Activated CD4-positive, alpha-beta T cell treated with anti-CD3 and anti-CD28 coated beads for 36 hours (primary cell): ENCODE measurements at regions of chr10 and their contacts with region 1.

Region 1: DNA sequence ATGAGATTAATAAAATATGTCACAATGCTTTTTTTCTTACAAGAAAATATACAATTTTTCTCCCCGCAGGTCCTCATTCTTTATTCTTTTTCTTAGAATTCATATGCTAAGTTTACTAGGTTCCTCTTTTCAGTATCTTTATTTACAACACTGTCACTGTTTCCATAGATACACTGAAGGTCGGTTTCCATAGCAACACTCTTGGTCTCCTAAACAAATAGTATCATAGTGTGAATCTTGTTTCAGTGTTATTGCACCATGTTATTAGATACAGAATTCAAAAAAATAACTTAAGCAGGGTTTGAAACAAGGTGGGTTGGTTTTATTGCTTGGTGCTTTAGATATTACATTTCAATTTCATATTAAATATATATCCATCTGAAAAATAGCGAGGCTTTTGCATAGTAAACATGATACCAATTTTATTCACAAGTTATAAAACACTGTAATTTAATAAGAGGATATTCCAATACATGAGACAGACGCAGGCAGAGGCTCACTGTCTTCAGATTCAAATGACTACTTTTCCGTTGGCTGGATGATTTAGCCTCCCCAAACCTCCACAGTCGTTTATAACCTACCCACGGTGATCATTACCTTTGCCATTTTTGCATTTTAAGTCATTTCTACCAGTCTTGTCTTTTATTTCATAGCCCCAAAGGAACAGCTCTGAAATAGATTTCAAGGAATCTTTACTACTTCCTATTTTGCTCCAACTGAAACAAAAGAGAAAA is 88.9 kb upstream of the KLF6 start:
- DNase-seq: no peak
- ATAC-seq: peak; percentile 27
- H3K4me3 Mint-ChIP-seq: peak overlapping the region; percentile 15
- H3K27ac Mint-ChIP-seq: peak overlapping the region; percentile 89
- H3K4me1 Mint-ChIP-seq: peaks cover 65% of the 10 kb centered on the region
- H3K27me3 Mint-ChIP-seq: no peaks in the 10 kb centered on the region

Region 2: DNA sequence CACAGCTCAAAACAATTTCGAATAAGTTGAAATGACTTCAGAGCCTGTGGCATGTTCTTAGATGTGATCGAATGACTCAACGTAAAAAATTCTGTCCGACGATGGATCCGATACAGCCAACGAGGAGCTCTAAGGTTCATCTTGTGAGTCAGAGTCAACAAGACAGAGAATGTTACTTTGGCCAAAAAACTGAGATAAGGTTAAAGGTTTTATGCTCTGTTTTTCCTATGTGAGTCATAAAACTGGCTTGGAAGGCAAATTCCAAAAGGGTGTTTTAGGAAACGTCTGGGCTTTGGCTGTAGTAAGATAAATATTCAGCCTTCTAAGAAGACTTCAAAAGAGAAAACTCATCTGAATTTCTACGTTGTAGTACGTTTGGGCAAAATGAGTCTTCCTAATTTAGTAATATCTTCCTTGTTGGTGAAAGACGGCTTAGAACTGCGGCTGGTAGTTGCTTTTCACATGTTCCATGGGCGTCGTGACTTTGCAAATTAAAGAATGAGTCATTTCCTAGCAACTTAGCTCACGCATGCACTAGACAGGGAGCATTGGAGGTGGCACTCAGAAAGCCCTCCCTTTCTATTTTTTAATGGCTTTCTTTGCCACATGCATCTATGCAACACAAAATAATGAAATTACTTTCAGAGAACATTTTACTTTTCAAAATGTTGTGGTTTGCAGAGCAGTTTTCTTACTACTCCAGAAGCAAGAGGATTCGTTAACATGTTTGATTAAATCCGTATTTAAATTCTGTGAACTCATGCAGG is 778.3 kb before region 1 on chr10:
- CTCF ChIA-PET with region 1: no interaction called
- POLR2A ChIA-PET with region 1: no interaction called
- intact Hi-C with region 1: loop called in 1 of 2 experiments (anchors 10 kb)
- DNase-seq: peak; percentile 80
- ATAC-seq: peak; percentile 86
- H3K4me3 Mint-ChIP-seq: peak overlapping the region; percentile 15
- H3K27ac Mint-ChIP-seq: peak overlapping the region; percentile 83
- H3K4me1 Mint-ChIP-seq: peaks cover 55% of the 10 kb centered on the region
- H3K27me3 Mint-ChIP-seq: no peaks in the 10 kb centered on the region

Region 3: GRCh38 chr10:3811291-3811870 is 62.5 kb before region 1 on chr10:
- CTCF ChIA-PET with region 1: interaction called, 4 read pairs
- POLR2A ChIA-PET with region 1: interaction called, 17 read pairs
- intact Hi-C with region 1: loop called in 1 of 2 experiments (anchors 1 kb)
- DNase-seq: peak; percentile 78
- ATAC-seq: peak; percentile 62
- H3K4me3 Mint-ChIP-seq: peak overlapping the region; percentile 42
- H3K27ac Mint-ChIP-seq: no peak overlapping the region
- H3K4me1 Mint-ChIP-seq: peaks cover 80% of the 10 kb centered on the region
- H3K27me3 Mint-ChIP-seq: no peaks in the 10 kb centered on the region

Region 4: GRCh38 chr10:3887885-3888476 is 14.1 kb after region 1 on chr10:
- CTCF ChIA-PET with region 1: interaction called, 6 read pairs
- POLR2A ChIA-PET with region 1: interaction called, 13 read pairs
- intact Hi-C with region 1: no loop called
- DNase-seq: peak; percentile 72
- ATAC-seq: peak; percentile 83
- H3K4me3 Mint-ChIP-seq: peak overlapping the region; percentile 28
- H3K27ac Mint-ChIP-seq: peak overlapping the region; percentile 93
- H3K4me1 Mint-ChIP-seq: peaks cover 38% of the 10 kb centered on the region
- H3K27me3 Mint-ChIP-seq: peaks cover 3% of the 10 kb centered on the region

Region 5: DNA sequence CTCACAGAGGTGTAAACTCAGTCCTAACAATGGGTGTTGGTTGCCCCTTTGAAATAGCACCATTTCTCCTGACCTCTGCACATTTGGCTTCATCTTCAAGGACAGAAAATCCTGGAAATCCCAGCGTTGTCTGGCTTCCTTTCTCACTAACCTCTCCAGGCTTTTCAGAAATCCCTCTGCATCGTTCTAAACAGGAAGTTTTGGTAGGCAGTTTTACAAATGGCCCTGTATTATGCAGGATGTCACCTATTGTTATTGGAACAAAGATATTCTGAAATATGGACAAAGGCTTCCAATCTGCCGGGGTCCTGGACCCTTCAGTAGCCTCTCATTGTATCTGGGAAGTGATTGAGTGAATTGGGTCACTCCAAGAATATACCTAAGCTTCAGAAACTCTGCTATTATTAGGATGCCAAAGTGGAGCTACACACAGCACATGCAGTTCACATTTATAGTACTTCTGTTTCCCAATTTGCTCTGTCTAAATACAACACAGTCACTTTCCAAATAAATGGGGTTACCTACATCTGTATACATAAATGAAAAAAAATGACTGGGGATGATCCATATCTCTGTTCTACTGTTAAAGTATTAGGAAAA is 45.9 kb after region 1 on chr10:
- CTCF ChIA-PET with region 1: no interaction called
- POLR2A ChIA-PET with region 1: no interaction called
- intact Hi-C with region 1: no loop called
- DNase-seq: no peak
- ATAC-seq: no peak
- H3K4me3 Mint-ChIP-seq: no peak overlapping the region
- H3K27ac Mint-ChIP-seq: no peak overlapping the region
- H3K4me1 Mint-ChIP-seq: no peaks in the 10 kb centered on the region
- H3K27me3 Mint-ChIP-seq: peaks cover 2% of the 10 kb centered on the region

Region 6: GRCh38 chr10:3996697-3997096 is 122.8 kb after region 1 on chr10:
- CTCF ChIA-PET with region 1: no interaction called
- POLR2A ChIA-PET with region 1: interaction called, 13 read pairs
- intact Hi-C with region 1: no loop called
- DNase-seq: no peak
- ATAC-seq: peak; percentile 64
- H3K4me3 Mint-ChIP-seq: no peak overlapping the region
- H3K27ac Mint-ChIP-seq: peak overlapping the region; percentile 47
- H3K4me1 Mint-ChIP-seq: peaks cover 13% of the 10 kb centered on the region
- H3K27me3 Mint-ChIP-seq: no peaks in the 10 kb centered on the region